GM12878 (cell line): ENCODE measurements at regions of chr14 and their contacts with region 1.

Region 1: GRCh38 chr14:89178802-89179535 is 238.1 kb downstream of the FOXN3 start:
- DNase-seq: no peak
- ATAC-seq: no peak
- H3K4me3 ChIP-seq: no peak overlapping the region
- H3K27ac ChIP-seq: no peak overlapping the region
- H3K4me1 ChIP-seq: peaks cover 8% of the 10 kb centered on the region
- H3K27me3 ChIP-seq: no peaks in the 10 kb centered on the region
- CTCF ChIP-seq: no peak
- EP300 ChIP-seq: no peak
- POLR2A ChIP-seq: no peak
- RAD21 ChIP-seq: no peak

Region 2: DNA sequence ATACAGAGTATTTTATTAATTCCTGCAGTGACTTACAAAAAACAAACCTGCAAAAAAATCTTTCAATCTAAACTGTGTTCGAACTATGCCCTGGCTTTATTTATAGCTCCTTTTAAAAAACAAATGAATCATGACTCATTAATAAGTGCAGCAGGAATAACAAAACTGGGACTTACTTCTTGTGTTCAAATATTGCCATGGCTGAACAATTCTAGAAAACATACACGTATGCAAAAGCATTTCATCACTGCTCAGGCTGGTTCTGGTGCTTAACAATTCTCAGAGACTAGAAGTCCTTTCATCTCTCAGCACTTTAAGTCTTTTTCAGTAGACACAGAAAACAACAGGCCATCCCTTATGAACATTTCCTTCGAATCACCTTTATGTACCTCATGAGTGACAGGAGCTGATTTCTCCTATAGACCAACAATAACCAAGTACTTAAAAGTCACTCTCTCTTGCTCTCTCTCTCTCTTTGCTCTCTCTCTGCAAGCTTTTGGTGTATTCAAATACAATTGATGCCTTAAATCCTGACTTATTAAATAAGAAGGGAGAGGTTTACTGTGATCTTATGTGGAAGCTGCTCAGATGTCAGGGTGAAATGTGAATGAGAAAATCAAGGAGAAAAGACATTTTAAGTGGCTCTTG is 85.8 kb before region 1 on chr14:
- CTCF ChIA-PET with region 1: no interaction called
- POLR2A ChIA-PET with region 1: no interaction called
- RAD21 ChIA-PET with region 1: no interaction called
- SMC1A ChIA-PET with region 1: no interaction called
- in situ Hi-C with region 1: no loop called
- intact Hi-C with region 1: no loop called
- DNase-seq: no peak
- ATAC-seq: no peak
- H3K4me3 ChIP-seq: no peak overlapping the region
- H3K27ac ChIP-seq: no peak overlapping the region
- H3K4me1 ChIP-seq: no peaks in the 10 kb centered on the region
- H3K27me3 ChIP-seq: no peaks in the 10 kb centered on the region; a peak in 1 of 4 replicates
- CTCF ChIP-seq: no peak
- EP300 ChIP-seq: no peak
- POLR2A ChIP-seq: no peak
- RAD21 ChIP-seq: no peak

Region 3: GRCh38 chr14:89165189-89166181 is 13.5 kb before region 1 on chr14:
- CTCF ChIA-PET with region 1: interaction called, 31 read pairs
- POLR2A ChIA-PET with region 1: no interaction called
- RAD21 ChIA-PET with region 1: interaction called, 31 read pairs
- SMC1A ChIA-PET with region 1: interaction called, 36 read pairs
- in situ Hi-C with region 1: no loop called
- intact Hi-C with region 1: no loop called
- DNase-seq: peak; percentile 63
- ATAC-seq: peak; percentile 83
- H3K4me3 ChIP-seq: peak overlapping the region; percentile 62
- H3K27ac ChIP-seq: peak overlapping the region; percentile 97
- H3K4me1 ChIP-seq: peaks cover 19% of the 10 kb centered on the region
- H3K27me3 ChIP-seq: no peaks in the 10 kb centered on the region
- CTCF ChIP-seq: no peak
- EP300 ChIP-seq: no peak
- POLR2A ChIP-seq: 0 out of 2 replicates have a peak, but pooled peaks have one; percentile 55
- RAD21 ChIP-seq: no peak

Region 4: DNA sequence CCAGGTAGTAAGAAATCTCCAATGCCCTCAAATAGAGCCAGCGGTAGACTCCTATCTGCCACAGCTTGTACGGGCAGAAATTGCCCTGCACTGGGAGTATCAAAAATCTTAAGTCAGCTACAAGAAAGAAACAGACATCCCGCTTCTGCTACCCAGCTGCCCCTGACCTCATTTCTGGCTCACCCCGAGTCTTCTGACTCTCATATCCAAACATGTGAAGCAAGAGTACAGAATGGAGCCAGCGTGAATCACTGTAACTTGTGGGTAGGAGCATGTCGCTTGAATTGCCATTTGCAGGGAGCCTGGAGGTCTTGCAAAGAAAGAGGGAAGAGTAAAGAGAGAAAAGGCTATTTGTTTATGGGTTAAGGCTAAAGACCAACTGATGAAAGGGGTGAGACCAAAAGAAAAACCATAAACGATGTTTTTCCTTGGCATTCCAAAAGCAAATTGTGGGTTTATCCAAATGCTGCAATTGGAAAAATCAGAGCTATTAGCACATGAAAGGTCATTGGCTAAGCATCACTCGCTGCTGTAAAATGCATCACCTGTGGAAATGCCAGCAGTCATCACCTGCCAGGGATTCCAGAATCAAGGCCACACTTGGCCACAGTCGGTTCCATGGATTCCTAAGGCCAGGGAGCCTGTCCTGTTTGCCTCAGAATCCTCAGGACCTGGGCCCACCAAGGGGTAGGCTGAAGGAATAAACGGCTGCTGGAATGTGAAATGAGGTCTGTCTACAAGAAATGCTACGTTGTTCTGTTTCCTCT is 151.4 kb after region 1 on chr14:
- CTCF ChIA-PET with region 1: interaction called, 5 read pairs
- POLR2A ChIA-PET with region 1: no interaction called
- RAD21 ChIA-PET with region 1: interaction called, 5 read pairs
- SMC1A ChIA-PET with region 1: interaction called, 6 read pairs
- in situ Hi-C with region 1: no loop called
- intact Hi-C with region 1: loop called (anchors 10 kb)
- DNase-seq: no peak
- ATAC-seq: peak; percentile 1; the same call in 1 of the 3 replicates
- H3K4me3 ChIP-seq: no peak overlapping the region; the same call in 1 of the 2 replicates
- H3K27ac ChIP-seq: peak overlapping the region; percentile 91
- H3K4me1 ChIP-seq: peaks cover 50% of the 10 kb centered on the region
- H3K27me3 ChIP-seq: no peaks in the 10 kb centered on the region
- CTCF ChIP-seq: no peak
- EP300 ChIP-seq: no peak
- POLR2A ChIP-seq: no peak
- RAD21 ChIP-seq: no peak

Region 5: GRCh38 chr14:89416002-89416995 is 237.3 kb after region 1 on chr14:
- CTCF ChIA-PET with region 1: interaction called, 12 read pairs
- POLR2A ChIA-PET with region 1: no interaction called
- RAD21 ChIA-PET with region 1: interaction called, 6 read pairs
- SMC1A ChIA-PET with region 1: interaction called, 14 read pairs
- in situ Hi-C with region 1: no loop called
- intact Hi-C with region 1: loop called (anchors 1 kb)
- DNase-seq: peak; percentile 94
- ATAC-seq: peak; percentile 85
- H3K4me3 ChIP-seq: peak overlapping the region; percentile 85
- H3K27ac ChIP-seq: peak overlapping the region; percentile 91
- H3K4me1 ChIP-seq: peaks cover 6% of the 10 kb centered on the region
- H3K27me3 ChIP-seq: no peaks in the 10 kb centered on the region
- CTCF ChIP-seq: no peak
- EP300 ChIP-seq: no peak
- POLR2A ChIP-seq: peak; percentile 31; the same call in 1 of the 2 replicates
- RAD21 ChIP-seq: no peak

Region 6: DNA sequence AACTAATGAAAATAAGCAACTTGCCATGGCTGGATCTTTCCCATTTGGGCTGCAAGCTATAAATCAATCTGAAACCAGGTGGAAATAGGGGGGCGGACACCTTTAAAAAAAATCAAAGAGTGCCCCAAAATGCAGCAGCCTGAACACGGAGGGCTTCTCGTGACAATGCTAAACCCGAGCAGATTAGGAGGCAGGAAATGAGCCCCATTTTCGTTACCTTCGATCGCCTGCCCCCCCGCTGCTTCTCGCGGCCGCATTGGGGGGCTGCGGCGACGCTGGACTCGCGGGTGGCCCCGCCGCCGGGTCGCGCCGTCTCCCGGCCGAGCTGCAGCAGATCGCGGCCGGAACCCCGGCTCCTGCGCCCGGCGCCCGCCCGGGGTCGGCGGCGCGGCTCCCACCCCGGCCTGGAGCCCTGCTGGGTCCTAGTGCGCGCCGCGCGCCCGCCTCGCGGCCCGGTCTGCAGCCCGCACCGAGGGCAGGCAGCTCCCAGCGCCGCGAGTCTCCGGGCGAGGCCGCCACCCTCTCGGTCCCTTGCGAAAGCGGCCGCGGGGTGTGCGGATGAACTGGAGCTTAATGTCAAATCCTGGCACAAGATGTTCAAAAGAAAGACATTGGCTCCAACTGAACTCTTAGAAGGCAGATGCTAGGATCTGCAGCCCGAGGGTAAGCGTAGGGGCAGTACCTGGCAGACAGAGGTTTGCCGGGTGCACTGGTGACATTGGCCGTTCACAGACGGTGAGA is 440.0 kb after region 1 on chr14:
- CTCF ChIA-PET with region 1: no interaction called
- POLR2A ChIA-PET with region 1: no interaction called
- RAD21 ChIA-PET with region 1: no interaction called
- SMC1A ChIA-PET with region 1: no interaction called
- in situ Hi-C with region 1: no loop called
- intact Hi-C with region 1: loop called (anchors 10 kb)
- DNase-seq: no peak
- ATAC-seq: peak; percentile 88
- H3K4me3 ChIP-seq: peak overlapping the region; percentile 86
- H3K27ac ChIP-seq: peak overlapping the region; percentile 74
- H3K4me1 ChIP-seq: peaks cover 36% of the 10 kb centered on the region
- H3K27me3 ChIP-seq: no peaks in the 10 kb centered on the region
- CTCF ChIP-seq: no peak
- EP300 ChIP-seq: no peak
- POLR2A ChIP-seq: peak; percentile 77
- RAD21 ChIP-seq: peak; percentile 17; the same call in 1 of the 2 replicates

Region 7: DNA sequence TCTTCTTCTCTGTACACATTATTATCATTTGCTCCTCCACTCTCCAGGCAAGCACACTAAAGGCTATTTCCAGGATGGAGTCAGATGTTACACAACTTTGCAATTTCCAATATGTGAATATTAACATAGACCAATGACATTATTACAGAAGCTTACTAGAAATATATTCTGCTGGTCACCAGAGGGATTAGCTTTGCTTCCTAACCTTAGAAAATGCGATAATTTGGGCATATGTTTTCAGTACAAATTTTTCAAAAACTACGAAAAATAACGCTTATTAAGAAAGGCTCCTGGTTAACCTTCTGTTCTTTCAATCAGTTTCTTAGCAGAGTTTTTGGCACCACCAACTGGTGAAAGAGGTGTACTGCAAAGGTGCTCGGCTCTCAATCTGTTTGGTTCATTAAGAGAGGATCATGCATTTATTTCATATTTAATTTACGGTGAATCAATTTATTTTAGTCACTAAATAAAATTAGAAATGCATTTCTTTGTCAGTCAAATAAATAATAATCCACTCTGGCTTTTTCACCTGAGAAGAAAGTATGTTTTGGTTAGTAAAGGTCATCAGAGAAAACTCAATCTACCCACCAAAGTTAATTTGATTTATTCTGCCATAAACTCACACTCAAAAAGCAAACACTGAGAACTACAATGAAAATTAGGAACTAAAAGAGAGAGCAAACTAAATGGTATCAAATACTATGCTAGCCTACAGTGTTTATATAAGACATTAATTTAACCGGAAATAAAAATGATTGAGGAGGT is 736.3 kb after region 1 on chr14:
- CTCF ChIA-PET with region 1: interaction called, 11 read pairs
- POLR2A ChIA-PET with region 1: no interaction called
- RAD21 ChIA-PET with region 1: no interaction called
- SMC1A ChIA-PET with region 1: interaction called, 4 read pairs
- in situ Hi-C with region 1: loop called (anchors 5 kb)
- intact Hi-C with region 1: loop called (anchors 2 kb)
- DNase-seq: peak; percentile 25
- ATAC-seq: peak; percentile 75
- H3K4me3 ChIP-seq: no peak overlapping the region
- H3K27ac ChIP-seq: no peak overlapping the region
- H3K4me1 ChIP-seq: no peaks in the 10 kb centered on the region
- H3K27me3 ChIP-seq: no peaks in the 10 kb centered on the region
- CTCF ChIP-seq: peak; percentile 85 to 92 (median 87)
- EP300 ChIP-seq: no peak
- POLR2A ChIP-seq: no peak
- RAD21 ChIP-seq: peak; percentile 96